MCF 10A (cell line): ENCODE measurements at regions of chr10 and their contacts with region 1.

Region 1: DNA sequence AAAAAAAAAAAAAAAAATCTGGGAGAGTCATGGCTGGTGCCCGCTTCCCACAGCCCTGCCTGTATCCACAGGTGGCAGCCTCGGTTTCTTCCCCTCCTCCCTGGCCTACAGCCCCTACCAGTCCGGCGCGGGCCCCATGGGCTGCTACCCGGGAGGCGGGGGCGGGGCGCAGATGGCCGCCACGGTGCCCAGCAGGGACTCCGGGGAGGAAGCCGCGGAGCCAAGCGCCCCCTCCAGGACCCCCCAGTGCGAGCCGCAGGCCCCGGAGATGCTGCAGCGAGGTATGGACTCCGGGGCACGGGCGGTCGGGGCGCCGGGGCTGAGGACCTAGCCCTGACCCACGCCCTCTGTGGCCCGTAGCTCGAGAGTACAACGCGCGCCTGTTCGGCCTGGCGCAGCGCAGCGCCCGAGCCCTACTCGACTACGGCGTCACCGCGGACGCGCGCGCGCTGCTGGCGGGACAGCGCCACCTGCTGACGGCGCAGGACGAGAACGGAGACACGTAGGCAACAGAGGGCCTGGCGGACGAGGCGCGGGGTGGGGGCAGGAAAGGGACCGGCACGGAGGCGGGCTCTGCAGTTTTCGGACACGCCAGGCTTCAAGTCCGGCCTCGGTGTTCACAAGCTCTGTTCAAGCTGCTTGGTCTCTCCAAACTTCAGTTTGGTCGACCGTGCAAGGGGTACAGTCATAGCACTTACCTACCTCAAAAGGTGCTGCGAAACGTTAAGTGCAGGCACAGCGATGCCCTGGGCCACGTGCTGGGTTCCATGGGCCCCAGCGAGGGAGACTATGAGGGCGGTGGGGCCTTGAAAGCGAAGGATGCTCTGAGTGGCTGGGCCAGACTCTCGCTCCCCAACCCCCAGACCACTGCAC is 3.9 kb downstream of the NFKB2 start:
- DNase-seq: peak; percentile 75
- H3K4me3 Mint-ChIP-seq: peak overlapping the region; percentile 54
- H3K27ac Mint-ChIP-seq: no peak overlapping the region
- H3K4me1 Mint-ChIP-seq: peaks cover 23% of the 10 kb centered on the region
- H3K27me3 Mint-ChIP-seq: no peaks in the 10 kb centered on the region
- CTCF ChIP-seq: peak; percentile 92

Region 2: GRCh38 chr10:102167861-102168260 is 231.6 kb before region 1 on chr10:
- CTCF ChIA-PET with region 1: interaction called, 12 read pairs
- POLR2A ChIA-PET with region 1: interaction called, 4 read pairs
- intact Hi-C with region 1: loop called (anchors 1 kb)
- DNase-seq: no peak
- H3K4me3 Mint-ChIP-seq: no peak overlapping the region
- H3K27ac Mint-ChIP-seq: no peak overlapping the region
- H3K4me1 Mint-ChIP-seq: peaks cover 5% of the 10 kb centered on the region
- H3K27me3 Mint-ChIP-seq: peaks cover 11% of the 10 kb centered on the region
- CTCF ChIP-seq: no peak

Region 3: GRCh38 chr10:102245101-102245931 is 154.1 kb before region 1 on chr10 and contains the start of gene GBF1:
- CTCF ChIA-PET with region 1: interaction called, 7 read pairs
- POLR2A ChIA-PET with region 1: interaction called, 11 read pairs
- intact Hi-C with region 1: no loop called
- DNase-seq: peak; percentile 100
- H3K4me3 Mint-ChIP-seq: peak within 1 kb of the TSS; percentile 99
- H3K27ac Mint-ChIP-seq: peak within 1 kb of the TSS; percentile 97
- H3K4me1 Mint-ChIP-seq: peaks cover 45% of the 10 kb centered on the region
- H3K27me3 Mint-ChIP-seq: no peaks in the 10 kb centered on the region
- CTCF ChIP-seq: no peak
- total RNA-seq, gene GBF1: 50.0 and 50.6 TPM in 2 replicates

Region 4: DNA sequence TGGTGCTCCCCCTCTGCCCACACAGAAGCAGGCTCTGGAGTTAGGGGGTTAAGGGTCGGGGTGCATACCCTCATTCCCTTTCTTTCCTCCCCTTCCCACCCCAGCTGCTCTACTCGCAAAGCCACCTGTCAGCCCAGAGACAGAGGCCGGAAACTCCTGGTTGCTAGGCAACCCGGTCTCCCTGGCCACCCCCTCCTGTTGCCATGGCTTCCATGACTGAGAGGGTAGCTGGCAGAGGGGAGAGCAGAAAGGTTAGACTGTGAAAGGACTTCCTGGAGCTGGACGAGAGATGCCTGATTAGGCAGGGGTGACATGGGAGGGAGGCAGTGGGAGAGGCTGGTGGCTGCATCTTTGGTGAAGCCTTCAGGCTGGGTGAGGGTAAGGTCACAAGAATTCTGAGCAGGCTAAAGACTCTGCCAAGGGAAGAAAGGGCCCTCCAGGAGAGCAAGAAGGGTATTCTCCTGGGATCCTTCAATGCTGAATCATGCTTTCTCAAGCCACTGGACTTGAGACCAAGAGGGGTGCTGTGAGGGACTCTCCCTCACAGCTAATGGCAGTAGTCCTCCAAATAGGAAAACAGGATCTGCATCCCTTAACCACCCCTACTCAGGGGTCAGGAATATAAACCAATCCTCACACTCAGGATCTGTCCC is 13.7 kb after region 1 on chr10:
- CTCF ChIA-PET with region 1: interaction called, 14 read pairs
- POLR2A ChIA-PET with region 1: interaction called, 9 read pairs
- intact Hi-C with region 1: no loop called
- DNase-seq: no peak
- H3K4me3 Mint-ChIP-seq: no peak overlapping the region
- H3K27ac Mint-ChIP-seq: no peak overlapping the region
- H3K4me1 Mint-ChIP-seq: no peaks in the 10 kb centered on the region
- H3K27me3 Mint-ChIP-seq: peaks cover 57% of the 10 kb centered on the region
- CTCF ChIP-seq: no peak

Region 5: DNA sequence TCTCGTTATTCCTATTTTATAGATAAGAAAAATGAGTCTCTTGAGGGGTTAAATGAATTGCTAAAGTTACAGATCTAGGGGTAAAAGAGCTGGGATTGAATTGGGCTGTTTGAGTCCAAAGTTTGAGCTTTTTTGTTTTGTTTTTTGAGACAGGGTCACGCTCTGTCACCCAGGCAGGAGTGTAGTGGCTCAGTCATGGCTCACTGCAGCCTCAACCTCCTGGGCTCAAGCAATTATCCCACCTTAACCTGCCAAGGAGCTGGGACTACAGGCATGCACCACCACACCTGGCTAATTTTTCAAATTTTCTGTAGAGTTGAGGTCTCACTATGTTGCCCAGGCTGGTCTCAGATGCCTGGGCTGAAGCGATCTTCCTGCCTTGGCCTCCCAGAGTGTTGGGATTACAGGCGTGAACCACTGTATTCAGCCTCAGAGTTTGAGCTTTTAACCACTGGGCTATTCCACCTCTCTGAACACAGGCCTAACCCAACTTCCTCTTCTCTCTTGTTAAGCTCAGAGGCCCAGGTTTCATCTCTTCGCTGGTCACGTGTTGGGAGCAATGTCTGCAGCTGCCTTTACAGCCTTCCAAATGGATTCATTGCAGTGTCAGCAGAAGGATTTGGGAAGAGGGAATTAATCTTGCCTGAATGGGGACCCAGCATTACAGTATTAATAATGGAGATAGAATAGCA is 112.3 kb after region 1 on chr10:
- CTCF ChIA-PET with region 1: no interaction called
- POLR2A ChIA-PET with region 1: no interaction called
- intact Hi-C with region 1: no loop called
- DNase-seq: no peak
- H3K4me3 Mint-ChIP-seq: no peak overlapping the region
- H3K27ac Mint-ChIP-seq: no peak overlapping the region
- H3K4me1 Mint-ChIP-seq: no peaks in the 10 kb centered on the region
- H3K27me3 Mint-ChIP-seq: no peaks in the 10 kb centered on the region
- CTCF ChIP-seq: no peak